ENCODE measurements at regions of chr5 and their contacts with region 1.

Region 1: GRCh38 chr5:168706655-168707069 is 127.5 kb upstream of the PANK3 start:
- DNase-seq: peak; percentile 66
- H3K4me3 Mint-ChIP-seq: no peak overlapping the region
- H3K27ac Mint-ChIP-seq: no peak overlapping the region
- H3K4me1 Mint-ChIP-seq: peaks cover under 1% of the 10 kb centered on the region
- H3K27me3 Mint-ChIP-seq: peaks cover 35% of the 10 kb centered on the region
- CTCF ChIP-seq: peak; percentile 18

Region 2: DNA sequence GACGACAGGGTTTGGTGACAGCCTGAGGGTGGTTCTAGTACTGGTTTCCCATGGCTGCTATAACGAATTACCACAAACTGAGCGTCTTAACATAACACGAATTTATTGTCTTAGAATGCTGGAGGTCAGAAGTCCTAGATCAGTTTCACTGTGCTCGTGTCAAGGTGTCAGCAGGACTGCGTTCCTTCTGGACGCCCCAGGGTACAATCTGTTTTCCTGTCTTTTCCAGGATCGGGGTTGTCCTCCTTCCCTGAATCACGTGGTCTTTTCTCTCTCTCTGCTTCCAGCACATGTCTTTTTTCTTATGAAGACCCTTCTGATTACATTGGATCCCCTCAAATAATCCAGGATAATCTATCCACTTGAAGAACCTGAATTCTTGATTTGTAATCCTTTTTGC is 164.2 kb after region 1 on chr5:
- CTCF ChIA-PET with region 1: no interaction called
- intact Hi-C with region 1: loop called (anchors 1 kb)
- DNase-seq: no peak
- H3K4me3 Mint-ChIP-seq: no peak overlapping the region
- H3K27ac Mint-ChIP-seq: no peak overlapping the region
- H3K4me1 Mint-ChIP-seq: no peaks in the 10 kb centered on the region
- H3K27me3 Mint-ChIP-seq: peaks cover 80% of the 10 kb centered on the region
- CTCF ChIP-seq: no peak

Region 3: DNA sequence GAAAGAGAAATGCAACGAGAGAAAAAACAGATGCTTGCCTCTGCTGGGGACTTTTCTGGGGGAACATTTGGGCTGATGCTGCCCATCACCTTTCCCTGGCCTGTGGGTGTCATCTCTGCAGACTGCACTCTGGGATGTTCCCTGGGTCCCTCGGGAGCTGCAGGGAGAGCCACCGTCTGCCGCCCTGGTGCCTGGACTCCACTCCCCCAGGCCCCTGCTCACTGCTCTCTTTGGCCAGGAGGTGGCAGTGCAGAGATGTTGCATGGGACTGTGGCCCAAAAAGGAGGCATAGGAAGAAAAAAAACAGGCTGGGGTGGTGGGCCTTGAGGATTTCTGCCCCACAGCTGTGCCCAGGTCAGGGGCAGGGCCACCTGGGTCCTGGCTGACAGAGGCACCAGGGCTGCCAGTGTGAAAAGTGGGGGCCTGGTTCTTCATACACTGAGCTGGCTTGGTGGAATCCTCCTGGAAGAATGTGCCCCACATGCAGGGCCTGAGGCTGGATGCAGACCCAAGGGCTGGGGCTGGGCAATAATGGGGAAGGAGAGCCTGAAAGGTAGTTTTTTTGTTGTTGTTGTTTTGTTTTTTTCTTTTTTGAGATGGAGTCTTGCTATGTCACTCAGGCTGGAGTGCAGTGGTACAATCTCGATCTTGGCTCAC is 240.7 kb after region 1 on chr5:
- CTCF ChIA-PET with region 1: no interaction called
- intact Hi-C with region 1: loop called (anchors 10 kb)
- DNase-seq: peak; percentile 71
- H3K4me3 Mint-ChIP-seq: no peak overlapping the region
- H3K27ac Mint-ChIP-seq: no peak overlapping the region
- H3K4me1 Mint-ChIP-seq: no peaks in the 10 kb centered on the region
- H3K27me3 Mint-ChIP-seq: peaks cover 48% of the 10 kb centered on the region
- CTCF ChIP-seq: peak; percentile 80

Region 4: DNA sequence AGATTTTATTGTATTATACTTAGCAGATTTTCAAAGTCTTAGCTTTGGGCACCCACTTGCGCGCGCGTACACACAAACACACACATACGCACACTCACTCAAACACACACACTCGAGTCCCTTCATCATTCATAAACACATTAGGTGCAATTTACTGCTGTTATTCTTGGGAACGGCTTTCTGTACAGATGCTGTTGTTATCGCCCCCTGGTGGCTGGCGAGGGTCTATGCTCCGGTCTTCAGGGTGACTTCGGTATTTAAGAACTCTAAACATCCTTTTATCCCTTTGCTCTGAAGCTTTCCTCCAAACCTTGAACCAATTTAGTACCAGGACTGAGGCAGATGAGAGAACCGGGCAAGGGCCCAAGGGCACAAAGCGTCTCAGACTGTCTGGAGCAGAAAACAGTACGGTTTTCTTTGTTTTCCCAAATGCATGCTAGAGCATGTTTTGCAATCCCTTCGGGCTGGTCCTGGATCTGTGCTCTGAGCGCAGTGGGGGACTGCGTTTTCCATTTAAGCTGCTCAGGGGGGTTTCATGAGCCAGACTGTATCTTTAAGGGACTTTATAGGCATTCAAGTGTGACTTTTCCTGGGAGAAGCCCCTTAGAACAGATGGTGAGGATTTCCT is 595.9 kb after region 1 on chr5:
- CTCF ChIA-PET with region 1: no interaction called
- intact Hi-C with region 1: loop called (anchors 1 kb)
- DNase-seq: peak; percentile 81
- H3K4me3 Mint-ChIP-seq: no peak overlapping the region
- H3K27ac Mint-ChIP-seq: no peak overlapping the region
- H3K4me1 Mint-ChIP-seq: no peaks in the 10 kb centered on the region
- H3K27me3 Mint-ChIP-seq: peaks cover 37% of the 10 kb centered on the region
- CTCF ChIP-seq: peak; percentile 70

Region 5: GRCh38 chr5:169583424-169584204 is 877.0 kb after region 1 on chr5 and contains the start of gene SPDL1:
- CTCF ChIA-PET with region 1: no interaction called
- intact Hi-C with region 1: loop called (anchors 10 kb)
- DNase-seq: peak; percentile 95
- H3K4me3 Mint-ChIP-seq: peak within 1 kb of the TSS; percentile 95
- H3K27ac Mint-ChIP-seq: peak within 1 kb of the TSS; percentile 90
- H3K4me1 Mint-ChIP-seq: peaks cover 26% of the 10 kb centered on the region
- H3K27me3 Mint-ChIP-seq: peaks cover 14% of the 10 kb centered on the region
- CTCF ChIP-seq: no peak
- total RNA-seq, gene SPDL1: 41.7 and 45.8 TPM in 2 replicates

Region 6: DNA sequence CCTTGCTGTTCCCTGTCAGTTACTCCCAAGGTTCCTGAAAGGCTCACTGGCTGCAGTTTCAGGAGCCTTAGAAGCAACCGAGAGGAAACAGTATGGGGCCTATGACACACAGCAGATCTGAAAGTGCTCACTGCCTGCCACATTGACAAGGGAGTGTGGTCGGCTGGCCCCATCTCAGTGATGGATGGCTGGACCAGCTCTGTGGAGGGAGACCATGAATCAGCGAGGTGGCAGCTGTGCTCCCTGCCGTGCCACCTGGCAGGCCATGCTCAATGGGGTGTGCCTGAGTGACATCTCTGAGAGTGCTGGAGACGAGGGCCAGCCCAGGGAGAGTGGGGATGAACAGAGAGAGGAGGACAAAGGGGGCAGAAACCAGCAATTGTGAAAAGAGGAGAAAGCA is 979.5 kb after region 1 on chr5:
- CTCF ChIA-PET with region 1: interaction called, 10 read pairs
- intact Hi-C with region 1: no loop called
- DNase-seq: no peak
- H3K4me3 Mint-ChIP-seq: no peak overlapping the region
- H3K27ac Mint-ChIP-seq: no peak overlapping the region
- H3K4me1 Mint-ChIP-seq: no peaks in the 10 kb centered on the region
- H3K27me3 Mint-ChIP-seq: peaks cover 29% of the 10 kb centered on the region
- CTCF ChIP-seq: no peak

Measured in Calu3 (cell line).